ENCODE measurements at regions of chr3 and their contacts with region 1.

Region 1: GRCh38 chr3:136250226-136250902 is at the start of gene PCCB:
- DNase-seq: peak; percentile 93 to 96 (median 94)
- H3K4me3 ChIP-seq: peak within 1 kb of the TSS; percentile 43 to 77
- H3K4me3 Mint-ChIP-seq: peak within 1 kb of the TSS; percentile 85 to 93 (median 90)
- H3K27ac ChIP-seq: peak within 1 kb of the TSS; percentile 75
- H3K27ac Mint-ChIP-seq: peak within 1 kb of the TSS; percentile 75 to 94 (median 90)
- H3K4me1 ChIP-seq: peaks cover 17% of the 10 kb centered on the region
- H3K4me1 Mint-ChIP-seq: peaks cover 15 to 27% (median 20%) of the 10 kb centered on the region in 4 donors
- H3K27me3 ChIP-seq: no peaks in the 10 kb centered on the region
- H3K27me3 Mint-ChIP-seq: no peaks in the 10 kb centered on the region
- total RNA-seq, gene PCCB: 12.1 to 12.4 TPM

Region 2: DNA sequence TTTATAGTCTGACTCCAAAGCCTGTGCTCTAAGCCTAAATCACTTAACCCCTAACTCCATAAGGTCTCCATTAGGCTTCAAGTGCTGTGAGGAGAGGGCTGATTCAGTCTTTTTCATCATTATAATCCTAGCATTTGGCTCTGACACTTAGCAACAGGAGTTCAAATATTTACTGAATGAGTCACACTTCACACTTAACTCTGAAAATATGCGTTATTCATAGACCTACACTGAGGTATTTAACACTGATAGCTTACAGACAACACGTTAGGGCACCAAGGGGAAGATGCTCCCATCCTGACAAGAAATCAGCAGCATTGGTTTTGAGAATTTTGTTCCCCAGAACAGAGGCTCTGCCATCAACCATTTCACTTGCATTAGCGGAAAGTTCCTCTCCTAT is 107.8 kb before region 1 on chr3:
- CTCF ChIA-PET with region 1: no interaction called
- POLR2A ChIA-PET with region 1: interaction called, 4 read pairs
- intact Hi-C with region 1: loop called (anchors 5 kb)
- DNase-seq: no peak
- H3K4me3 ChIP-seq: no peak overlapping the region
- H3K4me3 Mint-ChIP-seq: no peak overlapping the region
- H3K27ac ChIP-seq: no peak overlapping the region
- H3K27ac Mint-ChIP-seq: peak overlapping the region in 4 of 7 donors; percentile 22 to 70 (median 45)
- H3K4me1 ChIP-seq: no peaks in the 10 kb centered on the region
- H3K4me1 Mint-ChIP-seq: peaks cover 7 to 14% (median 10%) of the 10 kb centered on the region in 4 donors
- H3K27me3 ChIP-seq: no peaks in the 10 kb centered on the region
- H3K27me3 Mint-ChIP-seq: no peaks in the 10 kb centered on the region

Measured in CD4-positive, alpha-beta memory T cell (primary cell).